ENCODE measurements at regions of chr2 and their contacts with region 1.

Region 1: DNA sequence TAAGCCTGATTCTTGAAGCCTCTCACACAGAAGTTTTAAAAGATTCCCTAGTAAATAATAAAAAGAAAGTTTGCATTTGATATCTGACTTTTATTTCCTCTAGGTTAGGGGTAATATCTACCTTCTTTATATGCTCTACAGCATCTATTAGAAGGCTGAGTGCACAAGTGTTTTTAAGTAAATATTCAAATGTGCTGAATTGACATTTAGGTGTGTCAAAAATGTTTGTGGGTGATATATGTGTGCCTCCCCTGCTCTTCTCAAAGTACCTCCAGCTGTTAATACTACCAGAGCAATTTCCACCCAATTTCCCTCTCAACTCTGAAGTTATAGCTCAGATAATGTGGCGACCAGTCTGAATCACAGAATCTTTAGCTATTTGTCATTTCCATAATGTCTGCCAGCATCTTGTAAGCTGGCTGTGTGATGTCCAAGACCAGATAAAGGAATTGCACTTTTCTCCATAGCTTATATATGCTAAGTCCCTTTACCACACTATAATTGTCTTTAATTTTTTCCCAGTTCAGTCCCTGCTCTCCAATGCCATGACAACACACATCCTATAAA is 24.4 kb upstream of the ERMN start:
- DNase-seq: no peak
- ATAC-seq: no peak
- H3K4me3 Mint-ChIP-seq: peak overlapping the region in 1 of 10 donors; percentile 30
- H3K27ac Mint-ChIP-seq: peak overlapping the region in 4 of 10 donors; percentile 1 to 35 (median 18)
- H3K4me1 Mint-ChIP-seq: peaks cover 26 to 68% (median 62%) of the 10 kb centered on the region in 4 donors
- H3K27me3 Mint-ChIP-seq: no peaks in the 10 kb centered on the region

Region 2: GRCh38 chr2:157336137-157337010 is 13.7 kb before region 1 on chr2:
- POLR2A ChIA-PET with region 1: interaction called, 10 read pairs
- DNase-seq: peak in 8 of 10 donors; percentile 17 to 68 (median 40)
- ATAC-seq: peak; percentile 34 to 35
- H3K4me3 Mint-ChIP-seq: peak overlapping the region; percentile 33 to 76 (median 64)
- H3K27ac Mint-ChIP-seq: peak overlapping the region; percentile 17 to 91 (median 82)
- H3K4me1 Mint-ChIP-seq: peaks cover 30 to 74% (median 69%) of the 10 kb centered on the region in 4 donors
- H3K27me3 Mint-ChIP-seq: no peaks in the 10 kb centered on the region